ENCODE measurements at regions of chr17 and their contacts with region 1.

Region 1: GRCh38 chr17:79839363-79840268 is at the start of gene CBX4:
- DNase-seq: peak; percentile 98
- ATAC-seq: peak; percentile 70
- H3K4me3 ChIP-seq: peak within 1 kb of the TSS; percentile 99
- H3K27ac ChIP-seq: peak within 1 kb of the TSS; percentile 47
- H3K4me1 ChIP-seq: peaks cover 43% of the 10 kb centered on the region
- H3K27me3 ChIP-seq: peaks cover 39% of the 10 kb centered on the region
- CTCF ChIP-seq: peak; percentile 92
- total RNA-seq, gene CBX4: 53.5 and 75.4 TPM in 2 replicates

Region 2: DNA sequence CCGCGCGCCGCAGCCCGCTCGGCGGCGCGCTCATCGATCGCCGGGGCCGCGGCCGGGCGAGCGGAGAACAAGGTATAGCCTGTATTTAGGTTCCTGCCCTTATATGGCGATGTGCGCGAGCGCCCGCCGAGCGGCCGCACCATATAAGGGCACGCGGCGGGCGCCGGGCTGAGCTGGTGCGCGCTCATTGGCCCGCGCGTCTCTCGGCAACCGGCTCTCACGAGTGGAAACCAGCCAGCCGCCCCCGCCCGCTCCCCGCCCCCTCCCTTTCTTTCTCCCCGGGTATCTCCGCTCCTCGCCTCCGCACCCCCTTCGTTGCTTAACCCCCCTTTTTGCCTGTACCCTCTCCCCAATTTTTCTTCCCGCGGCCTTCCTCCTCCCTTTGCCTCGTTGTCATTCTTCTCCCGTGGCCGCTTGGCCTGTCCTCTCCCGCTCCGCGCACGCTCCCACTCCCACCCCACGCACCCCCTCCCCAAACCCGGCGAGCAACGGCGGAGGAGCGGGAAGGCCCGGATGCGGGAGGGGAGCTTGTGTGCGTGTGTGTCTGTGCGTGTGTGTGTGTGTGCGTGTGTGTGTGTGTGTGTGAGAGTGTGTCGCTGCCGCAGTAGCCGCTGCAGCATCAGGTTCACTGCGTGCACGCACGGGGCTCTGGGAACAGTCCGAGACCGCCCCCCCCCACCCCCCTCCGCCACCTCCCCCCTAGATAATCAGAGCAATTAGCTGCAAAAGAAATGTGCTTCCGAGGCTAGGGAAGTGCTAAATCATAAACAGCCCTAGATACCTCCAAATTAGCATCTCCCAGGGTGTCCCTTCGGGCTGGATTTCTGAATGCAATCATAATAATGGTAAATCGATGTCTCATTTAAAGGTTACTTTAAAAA is 29.2 kb before region 1 on chr17:
- CTCF ChIA-PET with region 1: interaction called, 11 read pairs
- POLR2A ChIA-PET with region 1: interaction called, 7 read pairs
- intact Hi-C with region 1: no loop called
- DNase-seq: peak; percentile 93
- ATAC-seq: peak; percentile 81
- H3K4me3 ChIP-seq: peak overlapping the region; percentile 59
- H3K27ac ChIP-seq: no peak overlapping the region
- H3K4me1 ChIP-seq: peaks cover 29% of the 10 kb centered on the region
- H3K27me3 ChIP-seq: peaks cover 62% of the 10 kb centered on the region
- CTCF ChIP-seq: no peak

Region 3: GRCh38 chr17:79923974-79924638 is 84.5 kb after region 1 on chr17:
- CTCF ChIA-PET with region 1: interaction called, 4 read pairs
- POLR2A ChIA-PET with region 1: no interaction called
- intact Hi-C with region 1: loop called (anchors 2 kb)
- DNase-seq: peak; percentile 52
- ATAC-seq: no peak
- H3K4me3 ChIP-seq: no peak overlapping the region
- H3K27ac ChIP-seq: no peak overlapping the region
- H3K4me1 ChIP-seq: peaks cover 19% of the 10 kb centered on the region
- H3K27me3 ChIP-seq: peaks cover 2% of the 10 kb centered on the region; the same call in 1 of the 2 replicates
- CTCF ChIP-seq: peak; percentile 81

Region 4: DNA sequence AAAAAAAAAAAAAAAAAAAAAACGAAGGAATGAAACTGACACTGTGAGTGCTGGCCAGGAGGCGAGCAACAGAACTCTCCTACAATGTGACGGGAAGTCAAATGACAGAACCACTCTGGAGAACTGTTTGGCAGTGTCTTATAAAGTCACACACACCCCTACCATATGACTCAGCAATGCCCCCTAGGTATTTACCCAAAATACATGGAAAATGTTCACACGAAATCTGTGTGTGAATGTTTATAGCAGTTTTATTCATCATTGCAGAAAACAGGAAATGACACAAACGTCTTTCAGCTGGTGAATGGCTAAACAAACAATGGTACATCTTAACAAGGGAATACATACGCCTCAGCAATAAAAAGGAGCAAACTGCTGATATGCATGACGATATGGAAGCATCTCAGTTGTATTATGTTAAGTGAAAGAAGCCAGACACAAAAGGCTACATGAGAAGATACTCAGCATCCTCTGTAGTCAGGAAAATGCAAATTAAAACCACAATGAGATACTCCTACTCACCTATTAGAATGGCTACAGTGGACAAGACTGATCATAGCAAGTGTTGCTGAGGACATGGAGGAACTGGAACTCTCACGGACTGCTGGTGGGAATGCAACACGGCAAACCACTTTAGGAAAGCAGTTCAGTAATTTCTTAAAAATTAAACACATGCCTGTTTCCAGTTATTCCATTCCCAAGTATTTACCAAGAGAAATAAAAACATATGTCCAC is 121.3 kb after region 1 on chr17:
- CTCF ChIA-PET with region 1: no interaction called
- POLR2A ChIA-PET with region 1: interaction called, 11 read pairs
- intact Hi-C with region 1: no loop called
- DNase-seq: peak; percentile 94
- ATAC-seq: peak; percentile 95
- H3K4me3 ChIP-seq: peak overlapping the region; percentile 13
- H3K27ac ChIP-seq: peak overlapping the region; percentile 74
- H3K4me1 ChIP-seq: peaks cover 13% of the 10 kb centered on the region
- H3K27me3 ChIP-seq: no peaks in the 10 kb centered on the region
- CTCF ChIP-seq: 0 out of 2 replicates have a peak, but pooled peaks have one; percentile 11